ENCODE measurements at regions of chr19 and their contacts with region 1.

Region 1: DNA sequence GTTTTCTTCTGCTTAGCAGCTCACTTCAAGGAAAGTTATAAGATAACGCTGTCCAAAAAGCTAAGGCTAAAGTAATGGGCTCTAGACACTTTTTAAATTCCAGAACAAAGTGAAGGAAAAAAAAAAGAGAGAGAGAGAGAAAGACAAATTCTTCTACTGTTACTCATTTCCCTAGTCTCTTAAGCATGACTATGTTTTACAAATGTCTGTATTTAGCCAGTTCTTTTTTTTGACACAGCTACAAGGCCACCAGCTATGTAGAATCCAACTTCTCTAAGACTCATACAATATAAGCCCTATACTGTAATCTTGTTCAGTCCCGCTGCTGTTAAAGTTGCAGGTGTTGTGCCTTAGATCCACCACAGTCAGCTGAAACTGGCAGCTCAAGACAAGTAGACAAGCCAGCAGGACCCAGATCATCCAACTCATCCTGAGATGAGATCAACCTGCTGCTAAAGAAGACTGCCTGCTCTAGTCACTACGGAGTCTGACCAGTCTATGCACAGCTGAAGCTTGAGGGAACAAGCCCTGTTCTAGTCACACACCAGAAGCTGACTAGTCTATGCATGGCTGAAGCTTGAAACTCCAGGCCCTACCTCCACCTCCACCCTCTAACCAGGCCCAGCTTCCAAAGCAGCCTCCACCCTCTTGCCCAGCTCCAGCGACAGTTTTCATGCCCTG is 10.3 kb upstream of the ZNF83 start:
- DNase-seq: no peak
- H3K4me3 Mint-ChIP-seq: no peak overlapping the region
- H3K27ac Mint-ChIP-seq: no peak overlapping the region
- H3K4me1 Mint-ChIP-seq: no peaks in the 10 kb centered on the region
- H3K27me3 Mint-ChIP-seq: no peaks in the 10 kb centered on the region
- CTCF ChIP-seq: no peak

Region 2: GRCh38 chr19:52658595-52659375 is 10.3 kb after region 1 on chr19:
- CTCF ChIA-PET with region 1: interaction called, 3 read pairs
- POLR2A ChIA-PET with region 1: interaction called, 10 read pairs
- intact Hi-C with region 1: no loop called
- DNase-seq: no peak
- H3K4me3 Mint-ChIP-seq: no peak overlapping the region
- H3K27ac Mint-ChIP-seq: no peak overlapping the region
- H3K4me1 Mint-ChIP-seq: peaks cover 18% of the 10 kb centered on the region
- H3K27me3 Mint-ChIP-seq: no peaks in the 10 kb centered on the region
- CTCF ChIP-seq: no peak